Activated T-helper 1 cell treated with anti-CD3 and anti-CD28 coated beads, Interleukin-12 subunit alpha, Interleukin-12 subunit beta, Interleukin-2, Interleukin-4 antibody, amounts not matched to agents 30 ng/mL and 10 ng/mL and 1 ng/mL, durations not matched to agents 14 hours and 24 hours and 36 hours (primary cell): ENCODE measurements at regions of chr1 and their contacts with region 1.

Region 1: GRCh38 chr1:186272486-186272885 is 102.6 kb downstream of the TPR start:
- DNase-seq: no peak
- H3K4me3 Mint-ChIP-seq: no peak overlapping the region
- H3K27ac Mint-ChIP-seq: no peak overlapping the region
- H3K4me1 Mint-ChIP-seq: peaks cover 30% of the 10 kb centered on the region
- H3K27me3 Mint-ChIP-seq: no peaks in the 10 kb centered on the region

Region 2: GRCh38 chr1:186014370-186015030 is 258.0 kb before region 1 on chr1:
- intact Hi-C with region 1: no loop called
- DNase-seq: no peak
- H3K4me3 Mint-ChIP-seq: no peak overlapping the region
- H3K27ac Mint-ChIP-seq: no peak overlapping the region
- H3K4me1 Mint-ChIP-seq: no peaks in the 10 kb centered on the region
- H3K27me3 Mint-ChIP-seq: peaks cover 2% of the 10 kb centered on the region

Region 3: GRCh38 chr1:186236921-186237320 is 35.6 kb before region 1 on chr1:
- intact Hi-C with region 1: loop called (anchors 1 kb)
- DNase-seq: no peak
- H3K4me3 Mint-ChIP-seq: no peak overlapping the region
- H3K27ac Mint-ChIP-seq: no peak overlapping the region
- H3K4me1 Mint-ChIP-seq: no peaks in the 10 kb centered on the region
- H3K27me3 Mint-ChIP-seq: peaks cover 10% of the 10 kb centered on the region

Region 4: DNA sequence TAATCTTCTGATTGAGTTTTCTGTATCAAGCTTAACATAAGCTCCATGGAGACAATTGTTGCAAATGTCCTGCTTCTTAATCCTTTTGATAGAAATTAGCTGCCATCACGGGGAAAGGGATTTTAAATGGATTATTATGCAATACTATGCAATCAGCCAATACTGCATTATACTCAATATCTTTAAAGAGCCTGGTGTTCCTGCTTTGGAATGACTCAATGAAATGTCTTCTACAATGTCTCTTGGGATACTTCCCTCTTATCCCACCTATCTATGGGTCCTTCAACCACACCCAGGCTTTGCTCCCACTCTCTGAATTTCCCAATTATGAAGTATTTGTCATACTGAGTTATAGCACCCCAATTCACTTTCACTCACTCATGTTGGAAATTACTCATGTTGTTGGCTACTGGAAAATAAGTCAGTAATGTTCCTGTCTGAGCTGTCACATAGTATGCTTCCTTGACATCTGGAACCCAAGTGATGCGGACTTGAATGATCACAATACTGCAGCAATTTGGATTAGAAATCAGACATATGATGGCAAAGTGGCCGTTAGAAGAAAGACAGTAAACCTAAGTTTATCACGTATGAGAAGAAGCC is 17.6 kb after region 1 on chr1:
- intact Hi-C with region 1: loop called (anchors 2 kb)
- DNase-seq: no peak
- H3K4me3 Mint-ChIP-seq: peak overlapping the region; percentile 59
- H3K27ac Mint-ChIP-seq: peak overlapping the region; percentile 91
- H3K4me1 Mint-ChIP-seq: peaks cover 82% of the 10 kb centered on the region
- H3K27me3 Mint-ChIP-seq: no peaks in the 10 kb centered on the region

Region 5: GRCh38 chr1:186304982-186305949 is 32.8 kb after region 1 on chr1:
- intact Hi-C with region 1: loop called (anchors 1 kb)
- DNase-seq: no peak
- H3K4me3 Mint-ChIP-seq: peak overlapping the region; percentile 48
- H3K27ac Mint-ChIP-seq: peak overlapping the region; percentile 86
- H3K4me1 Mint-ChIP-seq: peaks cover 58% of the 10 kb centered on the region
- H3K27me3 Mint-ChIP-seq: no peaks in the 10 kb centered on the region